ENCODE measurements at regions of chr14 and their contacts with region 1.

Region 1: GRCh38 chr14:96424109-96424989 is 32.4 kb downstream of the AK7 start:
- DNase-seq: peak; percentile 10
- H3K4me3 Mint-ChIP-seq: peak overlapping the region; percentile 71
- H3K27ac Mint-ChIP-seq: no peak overlapping the region
- H3K4me1 Mint-ChIP-seq: peaks cover 11% of the 10 kb centered on the region
- H3K27me3 Mint-ChIP-seq: peaks cover 7% of the 10 kb centered on the region

Region 2: DNA sequence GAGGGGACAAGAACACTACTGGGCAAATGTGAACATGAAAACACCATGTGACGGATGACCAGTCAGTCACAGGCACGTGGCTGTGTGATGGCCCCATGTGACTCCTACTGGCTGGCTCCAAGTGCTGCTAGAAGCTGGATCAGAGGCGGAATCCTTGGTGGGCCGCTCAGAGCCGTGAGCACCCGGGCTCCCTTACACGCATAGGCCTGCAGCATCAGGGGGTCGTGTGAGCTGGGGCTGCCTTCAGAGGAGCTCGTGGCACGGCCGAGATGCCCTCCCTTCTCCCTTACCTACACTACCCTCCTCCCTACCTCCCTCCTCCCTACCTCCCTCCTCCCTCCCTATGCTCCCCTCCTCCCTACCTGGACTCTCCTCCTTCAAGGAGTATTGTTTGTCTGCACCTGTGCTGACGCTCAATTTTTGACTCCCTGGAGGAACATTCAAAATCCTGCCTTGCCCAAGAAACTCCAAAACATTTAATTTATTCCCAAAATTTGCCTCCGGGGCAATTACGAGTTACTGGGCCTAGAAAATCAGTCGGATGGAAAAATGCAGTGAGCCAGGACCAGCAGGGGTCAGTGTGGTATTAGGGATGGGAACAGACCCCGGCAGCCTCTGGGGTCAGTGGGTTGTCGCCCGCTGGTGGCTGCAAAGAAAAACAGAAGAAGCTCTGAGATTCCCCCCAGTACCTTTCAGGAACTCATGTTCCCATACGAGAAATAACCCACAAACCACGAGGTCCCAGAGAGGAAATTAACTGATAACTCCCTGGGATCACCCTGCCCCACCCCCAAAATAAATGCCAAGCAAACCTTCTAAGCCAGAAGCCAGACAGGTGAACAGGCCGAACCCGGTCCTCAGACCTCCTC is 324.0 kb before region 1 on chr14:
- intact Hi-C with region 1: loop called (anchors 2 kb)
- DNase-seq: peak; percentile 4
- H3K4me3 Mint-ChIP-seq: no peak overlapping the region
- H3K27ac Mint-ChIP-seq: no peak overlapping the region
- H3K4me1 Mint-ChIP-seq: no peaks in the 10 kb centered on the region
- H3K27me3 Mint-ChIP-seq: no peaks in the 10 kb centered on the region

Region 3: DNA sequence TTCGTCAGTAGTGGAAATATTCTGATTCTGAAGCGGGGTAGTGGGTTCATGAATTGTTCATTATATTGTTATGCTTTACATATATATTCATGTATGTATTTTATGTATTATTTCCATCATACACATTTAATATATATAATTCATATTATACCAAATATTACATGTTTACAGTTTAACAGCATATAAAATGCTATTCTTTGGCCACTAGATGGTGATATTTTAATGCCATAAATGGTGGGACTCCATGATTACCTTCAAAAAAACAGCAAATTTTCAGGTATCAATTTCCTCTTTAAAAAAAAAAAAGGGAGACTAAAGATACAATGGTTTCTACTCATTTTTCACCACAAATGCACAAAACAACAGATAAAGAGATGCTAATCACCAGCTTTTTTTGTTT is 127.3 kb before region 1 on chr14:
- intact Hi-C with region 1: loop called (anchors 1 kb)
- DNase-seq: no peak
- H3K4me3 Mint-ChIP-seq: no peak overlapping the region
- H3K27ac Mint-ChIP-seq: no peak overlapping the region
- H3K4me1 Mint-ChIP-seq: no peaks in the 10 kb centered on the region
- H3K27me3 Mint-ChIP-seq: no peaks in the 10 kb centered on the region

Region 4: DNA sequence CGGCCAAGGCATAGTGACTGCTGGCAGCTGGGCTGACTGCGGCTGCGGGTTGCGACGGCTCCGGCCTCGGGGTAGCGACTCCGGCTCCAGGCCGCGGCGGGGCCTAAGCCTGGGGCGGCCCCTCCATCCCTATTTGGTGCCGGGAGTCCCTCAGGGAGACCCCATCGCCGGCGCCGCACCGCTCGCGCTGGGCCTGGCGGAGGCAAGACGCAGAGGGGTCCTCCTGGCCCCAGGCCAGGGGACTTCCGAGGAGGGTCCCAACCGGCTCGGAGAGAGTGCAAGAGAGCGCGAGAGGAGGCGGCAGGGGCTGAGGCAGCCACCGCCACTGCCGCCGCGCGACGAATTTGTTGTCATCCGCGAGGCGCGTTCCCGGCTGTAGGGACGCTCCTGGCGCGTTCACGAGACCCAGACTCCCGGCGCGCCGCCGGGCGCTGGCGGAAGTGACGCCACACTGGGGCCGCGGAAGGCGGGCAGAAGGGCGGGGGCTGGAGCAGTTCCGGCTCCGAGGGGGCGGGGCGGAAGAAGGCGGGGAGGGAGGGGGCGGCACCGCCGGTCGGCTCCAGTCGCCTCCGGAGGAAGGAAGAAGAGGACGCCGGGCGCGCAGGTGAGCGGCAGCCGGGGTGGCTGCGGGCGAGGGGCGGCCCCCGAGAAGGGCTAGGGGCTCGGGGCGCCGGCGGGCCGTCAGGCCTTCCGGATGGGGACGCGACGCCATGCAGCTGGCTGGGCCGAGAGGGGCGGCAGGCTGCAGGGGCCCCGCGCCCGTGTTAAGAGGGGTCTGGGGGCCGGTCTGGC is 61.2 kb before region 1 on chr14 and contains the starts of genes ATG2B and GSKIP:
- intact Hi-C with region 1: loop called (anchors 1 kb)
- DNase-seq: peak; percentile 97
- H3K4me3 Mint-ChIP-seq: peak within 1 kb of the TSS; percentile 98
- H3K27ac Mint-ChIP-seq: peak within 1 kb of the TSS; percentile 97
- H3K4me1 Mint-ChIP-seq: peaks cover 55% of the 10 kb centered on the region
- H3K27me3 Mint-ChIP-seq: no peaks in the 10 kb centered on the region
- total RNA-seq, gene ATG2B: 22.2 and 27.7 TPM in 2 replicates
- total RNA-seq, gene GSKIP: 22.7 and 23.7 TPM in 2 replicates

Measured in activated T-helper 1 cell treated with anti-CD3 and anti-CD28 coated beads, Interleukin-12 subunit alpha, Interleukin-12 subunit beta, Interleukin-2, Interleukin-4 antibody, amounts not matched to agents 30 ng/mL and 10 ng/mL and 1 ng/mL, durations not matched to agents 14 hours and 24 hours and 36 hours (primary cell).